ENCODE measurements at regions of chr5 and their contacts with region 1.

Region 1: DNA sequence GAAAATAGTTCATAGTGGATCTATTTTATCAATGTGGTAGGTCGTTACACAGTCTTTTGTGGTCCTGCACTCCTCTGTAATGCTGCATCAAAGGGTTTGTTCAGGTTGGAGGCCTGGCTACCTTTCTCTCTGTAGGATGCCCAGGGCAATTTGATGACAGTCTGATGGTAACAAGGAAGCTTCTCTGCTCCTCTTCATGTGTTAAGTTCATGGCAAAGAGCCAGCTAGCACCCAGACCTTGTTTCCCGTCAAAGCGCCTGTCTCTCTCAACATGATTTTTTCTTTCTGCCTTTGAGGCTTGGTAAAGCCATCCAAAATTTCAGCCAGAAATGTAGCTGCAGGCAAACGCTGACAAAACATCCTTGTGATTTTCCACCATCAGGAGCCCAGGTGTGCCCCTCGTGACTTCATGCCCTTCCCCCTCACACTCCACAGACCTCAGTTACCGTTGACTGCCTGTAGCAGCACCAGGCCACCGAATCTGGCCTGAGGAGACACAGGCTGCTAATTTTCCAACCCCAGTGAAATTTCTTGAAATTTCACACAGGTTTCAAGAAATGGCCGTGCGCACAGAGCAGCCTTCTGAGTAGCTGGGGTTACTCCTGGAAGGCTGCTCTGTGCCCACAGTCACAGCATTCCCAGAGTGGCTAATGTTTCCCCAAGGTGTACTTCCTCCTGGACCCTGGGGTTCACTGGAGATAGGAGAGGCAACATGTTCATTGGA is 292.7 kb downstream of the CWC27 start:
- DNase-seq: peak; percentile 77
- ATAC-seq: peak; percentile 71
- H3K4me3 ChIP-seq: peak overlapping the region; percentile 41; the same call in 1 of the 2 replicates
- H3K27ac ChIP-seq: peak overlapping the region; percentile 95
- H3K4me1 ChIP-seq: peaks cover 60% of the 10 kb centered on the region
- H3K27me3 ChIP-seq: no peaks in the 10 kb centered on the region
- CTCF ChIP-seq: no peak
- EP300 ChIP-seq: peak in 1 of 2 experiments; percentile 59; a peak in 1 of 4 replicates
- POLR2A ChIP-seq: peak; percentile 29; the same call in 1 of the 2 replicates
- RAD21 ChIP-seq: peak; percentile 34; the same call in 1 of the 2 replicates

Region 2: DNA sequence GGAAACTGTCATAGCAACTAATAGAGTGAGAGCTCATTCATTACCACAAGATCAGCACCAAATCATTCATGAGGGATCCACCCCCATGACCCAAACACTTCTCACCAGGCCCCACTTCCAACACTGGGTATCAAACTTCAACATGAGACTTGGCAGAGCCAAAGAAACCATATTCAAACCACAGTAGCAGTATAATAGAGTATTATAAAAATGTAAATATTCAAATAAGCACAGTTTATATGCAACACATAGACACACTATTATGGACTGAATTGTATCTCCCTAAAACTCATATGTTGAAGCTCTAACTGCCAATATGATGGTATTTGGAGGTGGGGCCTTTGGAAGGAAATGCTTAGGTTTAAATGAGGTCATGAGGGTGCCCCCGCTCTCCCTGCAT is 52.2 kb before region 1 on chr5:
- CTCF ChIA-PET with region 1: no interaction called
- POLR2A ChIA-PET with region 1: interaction called, 10 read pairs
- RAD21 ChIA-PET with region 1: no interaction called
- SMC1A ChIA-PET with region 1: no interaction called
- in situ Hi-C with region 1: no loop called
- intact Hi-C with region 1: no loop called
- DNase-seq: no peak
- ATAC-seq: no peak
- H3K4me3 ChIP-seq: no peak overlapping the region
- H3K27ac ChIP-seq: no peak overlapping the region
- H3K4me1 ChIP-seq: no peaks in the 10 kb centered on the region
- H3K27me3 ChIP-seq: no peaks in the 10 kb centered on the region
- CTCF ChIP-seq: no peak
- EP300 ChIP-seq: no peak
- POLR2A ChIP-seq: no peak
- RAD21 ChIP-seq: no peak

Region 3: DNA sequence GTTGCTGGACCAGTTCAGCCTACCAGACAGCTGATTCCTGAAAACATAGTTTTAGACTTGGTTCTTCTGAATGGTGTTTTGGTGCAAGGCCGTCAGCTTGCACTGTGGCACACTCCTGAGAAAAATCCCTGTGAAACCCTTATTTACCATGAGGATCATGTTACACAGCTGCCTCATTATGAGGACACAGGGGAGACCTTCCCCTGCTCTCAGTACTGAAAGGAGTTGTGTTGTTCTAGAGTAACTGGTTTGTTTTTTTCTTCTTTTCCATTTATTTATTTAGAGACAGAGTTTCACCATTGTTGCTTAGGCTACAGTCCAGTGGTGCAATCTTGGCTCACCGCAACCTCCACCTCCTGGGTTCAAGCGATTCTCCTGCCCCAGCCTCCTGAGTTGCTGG is 1572.4 kb after region 1 on chr5:
- CTCF ChIA-PET with region 1: no interaction called
- POLR2A ChIA-PET with region 1: no interaction called
- RAD21 ChIA-PET with region 1: no interaction called
- SMC1A ChIA-PET with region 1: no interaction called
- in situ Hi-C with region 1: no loop called
- intact Hi-C with region 1: no loop called
- DNase-seq: no peak
- ATAC-seq: no peak
- H3K4me3 ChIP-seq: no peak overlapping the region
- H3K27ac ChIP-seq: no peak overlapping the region
- H3K4me1 ChIP-seq: no peaks in the 10 kb centered on the region
- H3K27me3 ChIP-seq: no peaks in the 10 kb centered on the region
- CTCF ChIP-seq: no peak
- EP300 ChIP-seq: no peak
- POLR2A ChIP-seq: no peak
- RAD21 ChIP-seq: no peak